H1 (cell line): ENCODE measurements at regions of chr9 and their contacts with region 1.

Region 1: GRCh38 chr9:98848450-98849149 is 41.1 kb downstream of the GALNT12 start:
- DNase-seq: peak; percentile 83 to 91
- H3K4me3 ChIP-seq: no peak overlapping the region
- H3K27ac ChIP-seq: no peak overlapping the region
- H3K4me1 ChIP-seq: peaks cover 0 to 5% (median 2%) of the 10 kb centered on the region in 4 experiments; a peak in 3 of 7 replicates
- H3K27me3 ChIP-seq: no peaks in the 10 kb centered on the region
- CTCF ChIP-seq: peak; percentile 86 to 96 (median 96)
- EP300 ChIP-seq: no peak
- POLR2A ChIP-seq: no peak
- RAD21 ChIP-seq: peak; percentile 95 to 98

Region 2: DNA sequence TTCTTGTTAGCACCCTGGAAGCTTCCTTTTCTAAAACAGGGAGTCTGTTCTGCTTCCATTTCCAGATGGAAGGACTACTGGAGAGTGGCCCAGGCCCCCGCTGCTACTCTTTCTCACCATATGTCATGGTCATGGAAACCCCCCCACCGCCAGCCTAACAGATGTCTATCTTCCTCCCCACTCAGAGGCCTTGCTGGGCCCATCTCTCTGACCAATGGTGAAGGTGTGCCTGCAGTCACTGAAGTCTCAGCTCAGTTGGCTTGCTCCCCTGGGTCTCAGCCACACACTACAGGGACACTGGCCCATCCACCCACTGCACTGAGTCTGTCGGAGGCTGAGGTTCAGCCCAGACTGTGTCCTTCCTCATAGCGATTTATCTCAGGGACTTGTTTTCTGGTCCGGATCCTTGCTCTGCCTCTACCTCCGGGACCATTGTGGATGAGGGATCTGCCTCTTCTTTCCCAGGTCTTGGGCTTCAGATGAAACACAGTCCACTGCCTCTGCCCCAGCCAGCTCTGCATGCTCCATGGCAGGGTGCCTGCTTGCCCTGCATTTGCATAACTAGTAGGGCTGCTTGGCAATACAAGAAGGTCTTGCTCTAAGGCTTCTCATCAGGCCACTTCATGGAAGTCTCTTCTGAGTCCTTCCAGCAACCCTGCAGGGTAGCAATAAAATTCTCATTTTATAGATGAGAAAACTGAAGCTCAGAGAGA is 10.3 kb before region 1 on chr9:
- CTCF ChIA-PET with region 1: interaction called, 13 read pairs
- POLR2A ChIA-PET with region 1: no interaction called
- DNase-seq: no peak
- H3K4me3 ChIP-seq: no peak overlapping the region
- H3K27ac ChIP-seq: no peak overlapping the region
- H3K4me1 ChIP-seq: peaks cover 0 to 4% (median under 1%) of the 10 kb centered on the region in 4 experiments; a peak in 2 of 7 replicates
- H3K27me3 ChIP-seq: no peaks in the 10 kb centered on the region
- CTCF ChIP-seq: no peak
- EP300 ChIP-seq: no peak
- POLR2A ChIP-seq: no peak
- RAD21 ChIP-seq: no peak

Region 3: DNA sequence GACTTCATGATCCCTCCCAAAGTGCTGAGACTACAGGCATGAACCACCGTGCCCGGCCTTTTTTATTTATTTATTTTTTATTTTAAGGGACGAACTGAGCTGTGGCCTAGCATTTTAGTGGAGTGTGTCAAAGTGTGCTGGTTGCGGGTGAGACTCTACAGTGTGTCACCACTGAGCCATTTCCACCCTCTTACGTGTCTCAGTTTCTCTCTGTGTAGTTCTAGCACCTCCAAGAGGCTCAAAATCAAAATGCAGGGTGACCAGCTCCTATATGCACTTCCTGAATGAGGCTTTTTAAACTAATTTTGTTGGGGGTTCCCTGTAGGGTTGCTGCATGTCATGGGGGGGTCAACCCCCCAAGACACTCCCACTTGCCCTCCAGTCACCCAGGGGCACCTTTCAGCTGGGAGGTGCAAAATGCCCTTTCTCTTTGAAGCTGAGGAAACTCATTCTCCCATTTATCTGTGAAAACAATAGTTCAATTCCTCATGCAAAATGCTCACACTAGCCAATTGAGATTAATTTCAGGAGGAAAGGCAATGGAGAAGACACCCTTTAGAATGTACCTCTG is 164.4 kb after region 1 on chr9:
- CTCF ChIA-PET with region 1: interaction called, 18 read pairs
- POLR2A ChIA-PET with region 1: no interaction called
- DNase-seq: no peak
- H3K4me3 ChIP-seq: no peak overlapping the region
- H3K27ac ChIP-seq: no peak overlapping the region
- H3K4me1 ChIP-seq: no peaks in the 10 kb centered on the region
- H3K27me3 ChIP-seq: no peaks in the 10 kb centered on the region
- CTCF ChIP-seq: peak in 2 of 3 experiments; percentile 21 to 23; a peak in 2 of 4 replicates
- EP300 ChIP-seq: no peak
- POLR2A ChIP-seq: no peak
- RAD21 ChIP-seq: peak; percentile 50 to 58